Activated CD4-positive, alpha-beta memory T cell treated with anti-CD3 and anti-CD28 coated beads for 36 hours (primary cell): ENCODE measurements at regions of chr3 and their contacts with region 1.

Region 1: DNA sequence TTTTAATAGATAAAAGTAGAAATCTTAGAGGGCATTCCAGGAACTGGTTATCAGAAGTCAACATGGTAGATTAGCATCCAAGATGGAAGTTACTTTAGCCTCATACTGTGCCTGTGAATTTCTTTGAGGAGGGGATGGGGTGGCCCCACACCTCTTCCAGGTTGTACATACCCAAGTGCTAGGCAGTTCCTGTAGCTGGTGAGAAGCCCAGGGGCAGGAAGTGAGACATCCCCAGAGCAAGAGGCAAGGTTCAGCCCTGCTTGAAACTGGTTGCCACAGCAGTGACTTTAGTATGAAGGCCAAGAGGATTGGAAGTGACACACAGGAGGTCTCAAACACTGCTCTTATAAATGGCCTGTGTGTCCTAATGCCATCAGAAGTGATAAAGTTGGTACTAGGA is 11.9 kb downstream of the GTPBP8 start:
- DNase-seq: peak; percentile 81
- H3K4me3 Mint-ChIP-seq: no peak overlapping the region
- H3K27ac Mint-ChIP-seq: peak overlapping the region; percentile 84
- H3K4me1 Mint-ChIP-seq: peaks cover 68% of the 10 kb centered on the region
- H3K27me3 Mint-ChIP-seq: no peaks in the 10 kb centered on the region

Region 2: DNA sequence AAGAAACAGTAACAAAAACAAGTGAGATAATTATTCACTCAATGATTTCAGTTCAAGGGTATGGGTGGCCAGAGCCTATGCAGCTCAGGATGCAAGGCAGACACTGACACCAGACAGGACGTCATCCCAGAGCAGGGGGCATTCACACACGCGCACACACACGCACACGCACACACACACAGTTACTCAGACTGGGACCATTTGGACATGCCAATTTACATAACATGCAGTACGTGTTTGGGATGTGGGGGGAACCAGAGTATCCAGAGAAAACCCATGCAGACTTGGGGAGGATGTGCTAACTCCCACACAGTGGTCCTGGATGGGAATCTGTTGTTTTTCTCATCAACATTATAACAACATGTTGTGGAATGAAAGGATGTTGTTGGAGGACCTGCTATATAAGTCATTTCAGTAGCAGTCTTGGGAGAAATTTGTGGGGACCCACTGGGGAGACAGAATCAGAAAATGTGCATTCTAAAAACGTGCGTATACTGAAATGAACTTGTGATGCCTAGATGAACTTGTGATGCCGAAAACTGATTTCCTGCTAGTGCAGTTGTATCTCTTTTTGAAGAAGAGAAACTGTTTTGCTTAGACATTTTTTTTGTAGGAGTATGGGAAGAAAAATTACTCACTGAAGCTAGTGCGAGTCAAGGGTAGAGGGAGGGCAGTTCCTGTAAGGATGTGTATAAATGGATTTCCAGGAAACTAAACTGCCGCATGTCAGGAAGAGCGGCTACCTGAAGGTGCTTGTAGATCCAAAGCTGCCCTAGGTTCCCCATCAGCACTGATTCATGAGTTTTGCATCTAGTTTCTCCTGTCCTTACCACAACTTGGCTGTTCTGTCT is 644.5 kb before region 1 on chr3:
- CTCF ChIA-PET with region 1: no interaction called
- POLR2A ChIA-PET with region 1: no interaction called
- intact Hi-C with region 1: loop called (anchors 10 kb)
- DNase-seq: peak; percentile 62
- H3K4me3 Mint-ChIP-seq: peak overlapping the region; percentile 38
- H3K27ac Mint-ChIP-seq: peak overlapping the region; percentile 70
- H3K4me1 Mint-ChIP-seq: peaks cover 23% of the 10 kb centered on the region
- H3K27me3 Mint-ChIP-seq: no peaks in the 10 kb centered on the region

Region 3: DNA sequence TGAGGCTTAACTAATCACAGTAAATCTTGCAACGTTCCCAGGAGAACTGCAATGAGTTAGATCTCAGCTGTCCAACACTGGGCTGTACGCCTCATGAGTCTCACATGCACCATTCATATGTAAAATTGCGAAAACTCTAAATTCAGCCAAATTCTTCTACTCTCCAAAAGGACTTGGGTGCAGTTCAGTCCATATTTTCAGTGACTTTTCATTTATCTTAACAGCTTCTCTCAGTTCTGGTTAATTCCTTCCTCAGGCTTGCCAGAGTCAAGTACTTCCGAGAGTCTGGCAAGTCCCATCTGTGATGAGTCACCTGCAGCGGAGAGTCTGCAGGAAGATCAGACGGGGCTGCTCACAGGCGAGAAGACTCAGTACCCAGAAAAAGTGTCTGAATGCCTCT is 373.3 kb before region 1 on chr3:
- CTCF ChIA-PET with region 1: no interaction called
- POLR2A ChIA-PET with region 1: no interaction called
- intact Hi-C with region 1: no loop called
- DNase-seq: peak; percentile 58
- H3K4me3 Mint-ChIP-seq: no peak overlapping the region
- H3K27ac Mint-ChIP-seq: no peak overlapping the region
- H3K4me1 Mint-ChIP-seq: peaks cover 6% of the 10 kb centered on the region
- H3K27me3 Mint-ChIP-seq: no peaks in the 10 kb centered on the region

Region 4: DNA sequence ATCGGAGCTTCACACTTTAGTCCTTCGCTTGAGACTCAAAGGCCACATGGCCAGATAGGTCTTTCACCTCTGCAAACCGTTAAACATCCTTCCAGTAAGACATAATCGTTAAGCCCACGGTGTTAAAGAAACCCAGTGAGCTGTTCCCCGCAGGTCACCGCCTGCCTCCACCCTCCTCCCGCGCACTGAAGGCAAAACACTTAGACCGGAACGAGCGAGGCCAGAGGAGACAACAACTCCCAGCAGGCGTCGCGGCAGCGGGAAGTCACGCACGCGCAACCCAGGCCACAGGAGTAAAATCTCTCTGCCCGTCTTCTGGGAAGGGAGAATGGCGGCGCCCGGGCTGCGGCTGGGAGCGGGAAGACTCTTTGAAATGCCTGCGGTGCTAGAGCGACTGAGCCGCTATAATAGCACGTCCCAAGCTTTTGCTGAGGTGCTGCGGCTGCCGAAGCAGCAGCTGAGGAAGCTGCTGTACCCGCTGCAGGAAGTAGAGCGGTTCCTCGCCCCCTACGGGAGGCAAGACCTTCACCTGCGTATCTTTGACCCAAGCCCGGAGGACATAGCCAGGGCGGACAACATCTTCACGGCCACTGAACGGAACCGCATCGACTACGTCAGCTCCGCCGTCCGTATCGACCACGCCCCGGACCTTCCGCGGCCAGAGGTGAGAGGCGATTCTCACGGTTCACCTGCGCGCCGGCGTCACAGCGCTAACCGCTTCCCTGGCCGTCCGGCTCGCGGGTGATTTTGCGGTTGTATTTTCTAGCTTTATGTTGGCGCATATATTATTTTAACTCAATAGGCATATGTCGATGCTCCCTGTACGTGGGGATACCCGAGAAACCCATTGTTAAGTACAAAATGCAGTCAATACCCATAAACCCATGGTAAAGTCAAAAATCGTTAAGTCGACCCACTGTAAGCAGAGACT is 11.7 kb before region 1 on chr3 and contains the start of gene GTPBP8:
- CTCF ChIA-PET with region 1: interaction called, 5 read pairs
- POLR2A ChIA-PET with region 1: interaction called, 9 read pairs
- intact Hi-C with region 1: loop called (anchors 1 kb)
- DNase-seq: peak; percentile 93
- H3K4me3 Mint-ChIP-seq: peak within 1 kb of the TSS; percentile 91
- H3K27ac Mint-ChIP-seq: peak within 1 kb of the TSS; percentile 94
- H3K4me1 Mint-ChIP-seq: peaks cover 57% of the 10 kb centered on the region
- H3K27me3 Mint-ChIP-seq: no peaks in the 10 kb centered on the region
- total RNA-seq, gene GTPBP8: 34.7 to 35.7 TPM